Ascending aorta (tissue), 2 donors: ENCODE measurements at regions of chr19 and their contacts with region 1.

Region 1: DNA sequence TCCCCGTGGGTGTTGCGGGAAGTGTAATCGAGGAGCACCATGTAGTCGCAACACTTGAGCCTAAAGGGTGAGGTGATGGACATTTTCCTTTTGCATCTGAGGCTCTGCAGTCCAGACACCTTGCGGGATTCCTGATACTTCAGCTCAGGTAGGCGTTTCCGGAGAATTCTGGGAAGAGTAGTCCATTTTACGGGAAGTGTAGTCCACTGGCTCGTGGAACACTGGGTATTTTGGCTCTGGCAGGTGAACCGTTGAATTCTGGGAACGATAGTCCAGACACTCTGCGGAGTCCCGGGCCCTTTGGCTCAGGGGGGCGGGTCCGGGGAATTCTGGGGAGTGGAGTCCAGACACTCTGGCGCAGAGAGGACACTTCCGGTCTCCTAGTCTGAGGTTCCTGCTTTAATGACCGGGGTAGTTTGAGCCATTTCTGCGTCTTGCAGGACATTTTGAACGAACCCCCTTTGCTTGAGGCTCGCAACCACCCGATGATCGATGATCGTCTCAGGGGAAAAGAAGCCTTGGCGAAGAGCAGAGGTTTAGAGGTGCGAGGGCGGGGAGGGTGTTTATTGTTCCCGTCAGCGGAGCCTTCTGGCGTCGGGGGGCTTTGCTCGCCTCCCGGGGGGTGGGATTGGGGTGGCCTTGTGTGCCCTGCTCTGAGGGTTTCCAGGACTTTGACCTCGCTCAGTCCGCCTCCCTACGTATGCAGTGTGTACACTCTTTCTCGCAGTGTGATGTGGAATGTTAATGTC is at the start of gene ZNF223:
- DNase-seq: peak; percentile 86 to 97
- H3K4me3 ChIP-seq: peak within 1 kb of the TSS; percentile 84 to 86
- H3K27ac ChIP-seq: peak within 1 kb of the TSS; percentile 61 to 71
- H3K4me1 ChIP-seq: peaks cover 4 to 7% of the 10 kb centered on the region in 2 donors
- H3K27me3 ChIP-seq: no peaks in the 10 kb centered on the region
- CTCF ChIP-seq: no peak
- total RNA-seq, gene ZNF223: not detected

Region 2: DNA sequence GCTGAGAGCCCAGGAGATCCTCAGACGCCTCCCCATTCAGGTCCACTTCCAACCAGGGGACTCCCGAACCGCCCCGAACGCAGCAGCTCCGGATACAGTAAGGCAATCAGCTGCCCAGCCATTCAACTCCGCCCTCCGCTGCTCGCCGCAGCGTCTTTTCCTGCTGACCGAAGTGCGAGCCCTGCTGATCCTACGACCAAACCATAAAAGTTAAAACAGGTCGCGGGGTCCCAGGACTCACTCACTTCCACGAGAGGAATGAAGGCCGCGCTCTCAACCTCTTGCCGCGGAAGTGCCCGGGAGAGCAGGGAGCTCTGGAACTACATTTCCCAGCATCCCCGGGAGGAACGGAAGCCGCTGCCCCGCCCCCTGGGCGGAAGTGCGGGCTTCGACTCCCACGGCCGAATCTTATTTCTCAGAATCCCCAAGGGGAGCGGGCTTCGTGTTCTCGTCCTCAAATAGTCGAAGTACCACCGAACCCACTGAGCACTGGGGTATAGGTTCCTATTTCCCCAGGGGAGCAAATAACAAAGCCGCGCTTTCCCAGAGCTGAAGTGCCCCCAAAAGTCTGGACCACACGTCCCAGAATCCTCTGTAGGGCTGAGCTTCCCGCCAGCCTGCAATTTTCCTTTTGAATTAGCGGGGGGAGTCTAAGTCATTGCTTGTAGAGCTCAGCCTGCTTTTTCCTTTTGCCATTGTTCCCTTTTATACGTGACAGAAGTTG is 116.7 kb before region 1 on chr19 and contains the start of gene ZNF45:
- intact Hi-C with region 1: loop called (anchors 1 kb)
- DNase-seq: peak; percentile 60 to 95
- H3K4me3 ChIP-seq: peak within 1 kb of the TSS; percentile 76 to 93
- H3K27ac ChIP-seq: peak within 1 kb of the TSS; percentile 77 to 82
- H3K4me1 ChIP-seq: peaks cover 4 to 16% of the 10 kb centered on the region in 2 donors
- H3K27me3 ChIP-seq: no peaks in the 10 kb centered on the region
- CTCF ChIP-seq: no peak
- total RNA-seq, gene ZNF45: 6.5 TPM

Region 3: DNA sequence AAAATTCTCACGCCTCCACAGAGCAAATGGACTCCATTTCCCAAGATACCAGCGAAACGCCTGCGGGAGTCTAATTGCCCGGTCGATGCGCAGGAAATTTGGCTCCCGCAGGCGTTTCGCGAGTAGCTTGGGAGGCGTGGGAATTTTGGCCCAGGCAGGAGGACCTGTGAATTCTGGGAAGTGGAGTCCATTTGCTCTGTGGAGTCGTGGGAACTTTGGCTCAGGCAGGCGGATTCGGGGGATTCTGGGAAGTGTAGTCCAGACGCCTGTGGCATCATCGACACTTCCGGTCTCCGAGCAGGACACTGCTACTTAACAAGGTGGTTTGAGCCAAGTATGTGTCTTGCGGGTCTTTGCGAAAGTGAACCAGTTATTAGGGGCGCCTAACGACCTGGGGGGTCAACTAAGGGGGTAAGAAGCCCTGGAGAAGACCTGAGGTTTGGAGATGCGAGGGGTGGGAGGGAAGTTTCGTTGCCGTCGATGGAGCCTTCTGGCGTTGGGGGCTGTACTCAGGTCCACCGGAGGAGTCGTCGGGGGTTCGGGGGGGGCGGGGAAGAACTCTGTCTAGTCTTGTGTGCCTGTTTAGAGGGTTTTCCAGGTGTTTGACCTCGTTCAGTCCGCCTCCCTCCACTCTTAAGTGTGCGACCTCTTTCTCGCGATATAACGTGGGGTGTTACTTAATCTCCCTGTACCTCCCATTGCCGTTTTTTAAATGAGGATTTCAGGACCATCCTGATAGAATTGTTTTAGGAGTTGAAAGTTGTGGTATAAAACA is 67.7 kb before region 1 on chr19 and contains the start of gene ZNF155:
- intact Hi-C with region 1: loop called (anchors 1 kb)
- DNase-seq: peak; percentile 77 to 95
- H3K4me3 ChIP-seq: peak within 1 kb of the TSS; percentile 74
- H3K27ac ChIP-seq: peak within 1 kb of the TSS; percentile 72 to 81
- H3K4me1 ChIP-seq: peaks cover 0 to 4% of the 10 kb centered on the region in 2 donors
- H3K27me3 ChIP-seq: no peaks in the 10 kb centered on the region
- CTCF ChIP-seq: no peak
- total RNA-seq, gene ZNF155: not detected

Region 4: DNA sequence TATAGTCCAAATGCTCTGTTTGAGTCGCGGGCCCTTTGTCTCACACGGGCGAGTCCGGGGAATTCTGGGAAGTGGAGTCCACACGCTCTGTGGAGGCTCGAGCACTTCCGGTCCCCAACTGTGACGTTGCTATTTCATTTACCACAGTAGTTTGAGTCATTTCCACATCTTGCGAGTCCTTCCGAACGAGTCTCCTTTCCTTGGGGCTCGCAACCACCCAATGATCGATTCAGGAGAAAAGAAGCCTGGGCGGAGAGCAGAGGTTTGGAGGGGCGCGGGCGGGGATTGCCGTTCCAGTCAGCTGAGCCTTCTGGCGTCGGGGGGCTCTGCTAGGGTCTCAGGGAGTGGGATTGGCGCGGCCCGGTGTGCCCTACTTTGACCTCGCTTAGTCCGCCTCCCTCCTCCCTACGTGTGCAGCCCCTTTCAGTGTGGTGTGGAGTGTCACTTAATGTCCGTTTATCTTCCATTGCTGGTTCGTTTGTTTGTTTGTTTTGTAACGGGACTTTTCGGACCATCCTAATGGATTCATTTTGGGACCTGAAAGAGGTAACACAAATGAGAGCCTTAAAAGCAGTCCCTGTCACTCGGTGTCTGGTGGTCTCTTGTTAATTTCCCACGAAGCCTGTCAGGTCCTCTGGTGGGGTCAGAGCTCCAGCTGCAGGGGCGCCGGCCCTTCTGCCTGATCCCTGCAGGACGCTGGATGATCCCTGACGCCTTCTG is 26.5 kb before region 1 on chr19 and contains the start of gene ZNF222:
- intact Hi-C with region 1: loop called (anchors 1 kb)
- DNase-seq: peak; percentile 38 to 91
- H3K4me3 ChIP-seq: peak within 1 kb of the TSS; percentile 70 to 84
- H3K27ac ChIP-seq: peak within 1 kb of the TSS; percentile 29 to 57
- H3K4me1 ChIP-seq: peaks cover 2 to 3% of the 10 kb centered on the region in 2 donors
- H3K27me3 ChIP-seq: no peaks in the 10 kb centered on the region
- CTCF ChIP-seq: no peak
- total RNA-seq, gene ZNF222: 0.43 TPM

Region 5: DNA sequence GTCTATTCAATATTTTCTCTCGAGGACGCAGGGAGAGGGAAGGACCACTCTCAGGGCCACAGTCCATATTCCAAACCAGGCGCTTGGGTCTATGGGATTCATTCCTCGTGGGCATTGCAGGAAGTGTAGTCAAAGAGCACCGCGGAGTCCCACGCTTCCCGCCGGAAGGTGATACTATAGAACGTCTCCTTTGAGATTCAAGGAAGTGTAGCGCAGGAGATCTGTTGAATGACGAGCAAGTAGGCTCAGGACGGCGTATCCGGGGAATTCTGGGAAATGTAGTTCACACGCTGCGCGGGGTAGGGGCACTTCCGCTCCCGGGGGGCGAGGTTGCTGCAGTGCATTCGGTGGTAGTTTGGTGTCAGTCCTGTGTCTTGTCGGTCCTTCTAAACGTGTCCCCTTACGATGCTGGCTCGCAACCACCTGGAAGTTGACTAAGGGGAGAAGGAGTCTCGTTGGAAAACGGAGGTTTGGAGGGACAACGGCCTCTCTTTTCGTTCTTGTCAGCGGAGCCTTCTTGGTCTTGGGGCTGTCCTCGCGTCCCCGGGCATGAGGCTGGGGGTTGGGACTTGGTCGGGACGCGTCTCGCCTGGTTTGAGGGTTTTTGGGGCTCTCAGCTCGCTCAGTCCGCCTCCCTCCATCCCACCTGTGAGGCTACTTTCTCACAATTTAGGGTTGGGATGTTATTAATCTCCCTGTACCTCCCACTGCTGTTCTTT is 20.2 kb after region 1 on chr19 and contains the start of gene ZNF284:
- intact Hi-C with region 1: loop called (anchors 1 kb)
- DNase-seq: peak; percentile 54 to 92
- H3K4me3 ChIP-seq: peak within 1 kb of the TSS; percentile 44 to 79
- H3K27ac ChIP-seq: peak within 1 kb of the TSS; percentile 12 to 48
- H3K4me1 ChIP-seq: peaks cover 0 to 9% of the 10 kb centered on the region in 2 donors
- H3K27me3 ChIP-seq: no peaks in the 10 kb centered on the region
- CTCF ChIP-seq: no peak
- total RNA-seq, gene ZNF284: 0.21 TPM

Region 6: GRCh38 chr19:44093931-44094765 is 42.3 kb after region 1 on chr19 and contains the start of gene ZNF224:
- intact Hi-C with region 1: loop called (anchors 1 kb)
- DNase-seq: peak; percentile 66 to 95
- H3K4me3 ChIP-seq: peak within 1 kb of the TSS; percentile 80 to 86
- H3K27ac ChIP-seq: peak within 1 kb of the TSS; percentile 66 to 67
- H3K4me1 ChIP-seq: no peaks in the 10 kb centered on the region
- H3K27me3 ChIP-seq: no peaks in the 10 kb centered on the region
- CTCF ChIP-seq: no peak
- total RNA-seq, gene ZNF224: 119 TPM

Region 7: DNA sequence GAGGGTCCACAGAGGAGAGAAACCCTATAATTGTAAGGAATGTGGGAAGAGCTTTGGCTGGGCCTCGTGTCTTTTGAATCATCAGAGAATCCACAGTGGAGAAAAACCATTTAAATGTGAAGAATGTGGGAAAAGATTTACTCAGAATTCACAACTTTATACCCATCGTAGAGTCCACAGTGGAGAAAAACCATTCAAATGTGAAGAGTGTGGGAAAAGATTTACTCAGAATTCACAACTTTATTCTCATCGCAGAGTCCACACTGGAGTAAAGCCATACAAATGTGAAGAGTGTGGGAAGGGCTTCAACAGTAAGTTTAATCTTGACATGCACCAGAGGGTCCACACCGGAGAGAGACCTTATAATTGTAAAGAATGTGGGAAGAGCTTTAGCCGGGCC is 80.1 kb after region 1 on chr19:
- intact Hi-C with region 1: no loop called
- DNase-seq: no peak
- H3K4me3 ChIP-seq: no peak overlapping the region
- H3K27ac ChIP-seq: no peak overlapping the region
- H3K4me1 ChIP-seq: no peaks in the 10 kb centered on the region
- H3K27me3 ChIP-seq: no peaks in the 10 kb centered on the region
- CTCF ChIP-seq: no peak

Region 8: GRCh38 chr19:44164673-44165512 is 113.1 kb after region 1 on chr19 and contains the start of gene ZNF226:
- intact Hi-C with region 1: loop called (anchors 2 kb)
- DNase-seq: peak; percentile 82 to 96
- H3K4me3 ChIP-seq: peak within 1 kb of the TSS; percentile 63 to 80
- H3K27ac ChIP-seq: peak within 1 kb of the TSS; percentile 88 to 89
- H3K4me1 ChIP-seq: peaks cover 0 to 6% of the 10 kb centered on the region in 2 donors
- H3K27me3 ChIP-seq: no peaks in the 10 kb centered on the region
- CTCF ChIP-seq: no peak
- total RNA-seq, gene ZNF226: 4.7 TPM

Region 9: GRCh38 chr19:44557933-44558332 is 506.1 kb after region 1 on chr19:
- intact Hi-C with region 1: no loop called
- DNase-seq: no peak
- H3K4me3 ChIP-seq: no peak overlapping the region
- H3K27ac ChIP-seq: no peak overlapping the region
- H3K4me1 ChIP-seq: no peaks in the 10 kb centered on the region
- H3K27me3 ChIP-seq: no peaks in the 10 kb centered on the region
- CTCF ChIP-seq: no peak